ENCODE measurements at regions of chr19 and their contacts with region 1.

Region 1: DNA sequence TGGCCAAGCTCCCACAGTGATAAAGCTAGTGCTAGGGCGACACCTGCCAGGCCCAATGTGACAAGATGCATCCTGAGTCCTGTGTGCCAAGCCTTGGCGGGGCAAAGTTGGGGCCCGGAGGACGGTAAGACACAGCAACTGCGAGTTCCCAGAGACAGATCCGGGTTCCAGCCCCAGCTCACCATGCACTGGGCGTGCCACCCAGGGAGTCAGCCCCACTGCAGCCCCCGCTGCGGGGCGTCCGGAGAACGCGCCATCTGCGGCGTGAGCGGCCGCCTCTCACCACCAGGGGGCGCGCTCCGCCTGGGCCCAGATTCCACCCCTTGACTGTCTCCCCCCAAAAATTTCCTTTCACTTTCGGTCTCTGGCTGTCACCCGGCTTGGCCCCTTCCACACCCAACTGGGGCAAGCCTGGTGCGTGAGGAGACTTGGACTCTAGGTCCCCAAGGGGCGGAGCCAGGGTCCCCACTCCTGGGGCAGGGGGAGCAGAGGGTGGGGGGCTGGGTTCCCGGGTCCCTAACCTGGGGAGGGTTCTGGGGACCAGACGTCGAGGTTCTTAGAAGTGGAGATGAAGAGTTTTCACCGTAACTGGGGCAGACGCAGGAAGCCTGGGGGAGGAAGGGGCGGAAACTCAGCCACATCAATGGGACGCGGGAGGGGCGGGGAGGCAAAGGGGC is at the start of gene FLT3LG:
- DNase-seq: peak; percentile 91 to 98 (median 96)
- ATAC-seq: peak; percentile 72
- H3K4me3 ChIP-seq: peak within 1 kb of the TSS; percentile 87
- H3K4me3 Mint-ChIP-seq: peak within 1 kb of the TSS; percentile 91 to 100 (median 96)
- H3K27ac ChIP-seq: peak within 1 kb of the TSS; percentile 99
- H3K27ac Mint-ChIP-seq: peak within 1 kb of the TSS; percentile 95 to 100 (median 98)
- H3K4me1 ChIP-seq: peaks cover 50 to 52% of the 10 kb centered on the region in 2 donors
- H3K4me1 Mint-ChIP-seq: peaks cover 18 to 62% (median 51%) of the 10 kb centered on the region in 7 donors
- H3K27me3 ChIP-seq: no peaks in the 10 kb centered on the region
- H3K27me3 Mint-ChIP-seq: no peaks in the 10 kb centered on the region
- total RNA-seq, gene FLT3LG: 90.6 to 401 (median 280) TPM

Region 2: DNA sequence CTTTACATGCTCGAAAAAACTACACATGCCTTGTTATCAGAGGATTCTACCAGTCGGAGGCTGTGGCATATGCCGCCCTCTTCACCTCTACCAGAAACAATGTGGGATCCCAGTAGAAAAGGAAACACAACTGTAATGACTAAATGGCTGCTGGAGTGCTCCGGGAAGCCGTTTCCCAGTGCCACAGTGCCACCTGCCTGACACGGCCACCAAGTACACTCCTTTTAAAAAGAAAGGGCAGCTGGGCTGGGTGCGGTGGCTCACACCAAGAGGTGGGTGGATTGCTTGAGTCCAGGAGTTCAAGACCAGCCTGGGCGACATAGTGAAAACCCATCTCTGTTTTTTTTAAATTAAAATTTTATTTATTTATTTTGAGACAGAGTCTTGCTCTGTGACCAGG is 249.2 kb before region 1 on chr19:
- CTCF ChIA-PET with region 1: interaction called, 4 read pairs
- POLR2A ChIA-PET with region 1: no interaction called
- intact Hi-C with region 1: loop called in 1 of 2 experiments (anchors 1 kb)
- DNase-seq: peak in 3 of 9 donors; percentile 15 to 33 (median 24)
- ATAC-seq: peak; percentile 56
- H3K4me3 ChIP-seq: no peak overlapping the region
- H3K4me3 Mint-ChIP-seq: no peak overlapping the region
- H3K27ac ChIP-seq: no peak overlapping the region
- H3K27ac Mint-ChIP-seq: no peak overlapping the region
- H3K4me1 ChIP-seq: peaks cover 4 to 9% of the 10 kb centered on the region in 2 donors
- H3K4me1 Mint-ChIP-seq: peaks cover 5 to 7% (median 6%) of the 10 kb centered on the region in 7 donors
- H3K27me3 ChIP-seq: no peaks in the 10 kb centered on the region
- H3K27me3 Mint-ChIP-seq: peaks cover 2 to 6% (median 4%) of the 10 kb centered on the region in 5 donors

Region 3: DNA sequence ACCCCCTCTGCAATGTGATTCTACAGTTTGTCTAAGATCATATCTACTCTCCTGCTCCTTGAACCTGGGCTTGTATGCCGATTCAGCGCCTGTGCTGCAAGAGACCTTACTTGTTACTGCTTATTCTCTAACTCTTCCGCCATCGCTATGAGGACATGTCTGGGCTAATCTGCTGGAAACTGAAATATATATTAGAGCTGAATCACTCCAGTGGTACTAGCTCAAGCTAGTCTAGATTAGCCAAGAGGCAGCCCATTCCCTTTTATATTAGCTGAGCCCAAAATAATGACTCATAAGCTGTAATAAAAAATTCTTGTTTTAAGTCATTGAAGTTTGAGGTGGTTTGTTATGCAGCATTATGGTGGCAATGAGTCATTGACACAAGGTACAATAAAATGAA is 201.8 kb before region 1 on chr19:
- CTCF ChIA-PET with region 1: no interaction called
- POLR2A ChIA-PET with region 1: no interaction called
- intact Hi-C with region 1: loop called in 1 of 2 experiments (anchors 5 kb)
- DNase-seq: no peak
- ATAC-seq: no peak
- H3K4me3 ChIP-seq: no peak overlapping the region
- H3K4me3 Mint-ChIP-seq: no peak overlapping the region
- H3K27ac ChIP-seq: no peak overlapping the region
- H3K27ac Mint-ChIP-seq: no peak overlapping the region
- H3K4me1 ChIP-seq: no peaks in the 10 kb centered on the region
- H3K4me1 Mint-ChIP-seq: peaks cover 0 to 2% (median 0%) of the 10 kb centered on the region in 7 donors
- H3K27me3 ChIP-seq: no peaks in the 10 kb centered on the region
- H3K27me3 Mint-ChIP-seq: peaks cover 0 to 26% (median 15%) of the 10 kb centered on the region in 5 donors

Region 4: GRCh38 chr19:49391581-49392399 is 82.2 kb before region 1 on chr19:
- CTCF ChIA-PET with region 1: interaction called, 28 read pairs
- POLR2A ChIA-PET with region 1: interaction called, 5 read pairs
- intact Hi-C with region 1: loop called (anchors 1 kb)
- DNase-seq: peak; percentile 61 to 82 (median 74)
- ATAC-seq: peak; percentile 89
- H3K4me3 ChIP-seq: no peak overlapping the region
- H3K4me3 Mint-ChIP-seq: peak overlapping the region in 2 of 10 donors; percentile 3 to 51
- H3K27ac ChIP-seq: no peak overlapping the region
- H3K27ac Mint-ChIP-seq: peak overlapping the region in 6 of 9 donors; percentile 1 to 84 (median 54)
- H3K4me1 ChIP-seq: peaks cover 7 to 13% of the 10 kb centered on the region in 2 donors
- H3K4me1 Mint-ChIP-seq: peaks cover 6 to 26% (median 10%) of the 10 kb centered on the region in 7 donors
- H3K27me3 ChIP-seq: no peaks in the 10 kb centered on the region
- H3K27me3 Mint-ChIP-seq: peaks cover 0 to 11% (median 3%) of the 10 kb centered on the region in 5 donors

Region 5: DNA sequence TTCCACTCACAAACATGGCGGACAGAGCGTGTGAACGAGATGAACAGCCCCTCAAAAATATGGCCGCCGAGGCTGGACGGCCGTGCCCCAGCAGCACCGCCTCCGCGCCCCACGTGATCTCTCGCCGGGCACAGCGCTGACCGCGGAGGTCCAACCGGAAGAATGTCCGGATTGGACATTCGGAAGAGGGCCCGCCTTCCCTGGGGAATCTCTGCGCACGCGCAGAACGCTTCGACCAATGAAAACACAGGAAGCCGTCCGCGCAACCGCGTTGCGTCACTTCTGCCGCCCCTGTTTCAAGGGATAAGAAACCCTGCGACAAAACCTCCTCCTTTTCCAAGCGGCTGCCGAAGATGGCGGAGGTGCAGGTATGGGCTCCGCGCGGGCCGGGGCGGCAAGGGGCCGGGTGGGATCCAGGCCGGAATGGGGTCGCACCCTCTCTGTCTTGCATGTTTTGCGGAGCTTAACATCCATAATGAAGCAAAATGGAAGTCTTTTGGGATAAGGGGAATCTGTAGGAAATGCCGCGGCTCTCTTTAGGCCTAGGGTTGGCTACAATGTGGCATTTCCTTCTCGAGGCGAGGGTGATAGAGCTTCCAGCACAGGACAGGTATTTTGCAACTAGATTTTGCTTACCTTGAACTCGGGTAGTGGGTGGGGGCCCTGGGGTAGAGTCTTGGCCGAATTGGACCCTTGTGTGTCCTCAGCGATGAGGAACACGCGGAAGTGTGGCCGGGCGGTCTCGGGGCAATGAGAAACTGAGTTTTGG is 13.5 kb after region 1 on chr19 and contains the start of gene RPL13A:
- CTCF ChIA-PET with region 1: interaction called, 5 read pairs
- POLR2A ChIA-PET with region 1: interaction called, 28 read pairs
- intact Hi-C with region 1: loop called (anchors 1 kb)
- DNase-seq: peak; percentile 97 to 99 (median 99)
- ATAC-seq: peak; percentile 94
- H3K4me3 ChIP-seq: peak within 1 kb of the TSS; percentile 100
- H3K4me3 Mint-ChIP-seq: peak within 1 kb of the TSS; percentile 95 to 99 (median 98)
- H3K27ac ChIP-seq: peak within 1 kb of the TSS; percentile 92
- H3K27ac Mint-ChIP-seq: peak within 1 kb of the TSS; percentile 89 to 99 (median 96)
- H3K4me1 ChIP-seq: peaks cover 19 to 26% of the 10 kb centered on the region in 2 donors
- H3K4me1 Mint-ChIP-seq: peaks cover 27 to 52% (median 42%) of the 10 kb centered on the region in 7 donors
- H3K27me3 ChIP-seq: no peaks in the 10 kb centered on the region
- H3K27me3 Mint-ChIP-seq: peaks cover 0 to 9% (median 0%) of the 10 kb centered on the region in 5 donors
- total RNA-seq, gene RPL13A: 2,467 to 6,044 (median 5,762) TPM

Region 6: GRCh38 chr19:49497047-49497788 is 23.2 kb after region 1 on chr19:
- CTCF ChIA-PET with region 1: interaction called, 8 read pairs
- POLR2A ChIA-PET with region 1: interaction called, 33 read pairs
- intact Hi-C with region 1: loop called (anchors 1 kb)
- DNase-seq: peak; percentile 55 to 85 (median 77)
- ATAC-seq: peak; percentile 20
- H3K4me3 ChIP-seq: peak overlapping the region; percentile 97
- H3K4me3 Mint-ChIP-seq: peak overlapping the region; percentile 96 to 100 (median 99)
- H3K27ac ChIP-seq: peak overlapping the region; percentile 99
- H3K27ac Mint-ChIP-seq: peak overlapping the region; percentile 91 to 100 (median 98)
- H3K4me1 ChIP-seq: peaks cover 21 to 40% of the 10 kb centered on the region in 2 donors
- H3K4me1 Mint-ChIP-seq: peaks cover 32 to 64% (median 50%) of the 10 kb centered on the region in 7 donors
- H3K27me3 ChIP-seq: no peaks in the 10 kb centered on the region
- H3K27me3 Mint-ChIP-seq: peaks cover 0 to 12% (median 0%) of the 10 kb centered on the region in 5 donors

Region 7: DNA sequence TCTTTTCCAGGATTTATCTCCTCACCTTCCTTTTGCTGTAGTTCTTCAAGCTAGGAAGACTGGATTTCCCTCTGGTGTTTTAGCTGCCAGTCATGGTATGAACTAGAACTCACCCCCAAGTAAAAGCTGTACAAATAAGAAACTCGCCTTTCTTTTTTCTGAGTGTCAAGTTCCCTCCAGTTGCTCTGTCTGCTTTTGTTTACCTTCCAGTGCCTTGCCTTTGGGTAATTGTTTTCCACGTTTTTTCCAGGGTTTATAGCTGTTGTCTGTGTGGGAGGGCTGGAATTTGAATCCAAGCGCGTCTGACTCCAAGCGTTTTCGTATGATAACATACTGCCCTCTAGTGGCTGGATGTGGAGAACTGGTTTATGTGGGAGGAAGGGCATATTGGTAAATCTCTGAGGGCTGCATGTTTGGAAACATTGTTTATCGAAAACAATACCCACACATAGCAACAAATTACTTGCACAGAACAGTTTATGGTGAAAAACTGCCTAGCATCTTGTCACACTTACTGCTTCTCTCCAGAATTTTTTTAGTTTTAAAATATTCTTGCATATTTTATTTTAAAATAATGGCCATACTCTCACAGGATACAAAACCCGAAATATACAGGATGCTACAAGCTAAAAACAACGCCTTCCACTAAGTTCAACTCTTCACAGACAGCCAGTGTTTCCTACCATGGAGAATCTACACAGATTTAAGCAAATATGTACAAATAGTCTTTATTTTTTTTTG is 73.0 kb after region 1 on chr19:
- CTCF ChIA-PET with region 1: interaction called, 6 read pairs
- POLR2A ChIA-PET with region 1: interaction called, 3 read pairs
- intact Hi-C with region 1: loop called (anchors 1 to 2 kb)
- DNase-seq: peak in 8 of 9 donors; percentile 62 to 82 (median 78)
- ATAC-seq: peak; percentile 92
- H3K4me3 ChIP-seq: peak overlapping the region; percentile 30
- H3K4me3 Mint-ChIP-seq: peak overlapping the region; percentile 78 to 94 (median 84)
- H3K27ac ChIP-seq: peak overlapping the region; percentile 46
- H3K27ac Mint-ChIP-seq: peak overlapping the region; percentile 76 to 99 (median 91)
- H3K4me1 ChIP-seq: peaks cover 17 to 60% of the 10 kb centered on the region in 2 donors
- H3K4me1 Mint-ChIP-seq: peaks cover 29 to 81% (median 48%) of the 10 kb centered on the region in 7 donors
- H3K27me3 ChIP-seq: no peaks in the 10 kb centered on the region
- H3K27me3 Mint-ChIP-seq: peaks cover 0 to 3% (median 0%) of the 10 kb centered on the region in 5 donors

Measured in naive thymus-derived CD4-positive, alpha-beta T cell (primary cell).